ENCODE measurements at regions of chr1 and their contacts with region 1.

Region 1: GRCh38 chr1:101178688-101179491 is 57.9 kb upstream of the S1PR1 start:
- DNase-seq: peak; percentile 66
- H3K4me3 Mint-ChIP-seq: peak overlapping the region; percentile 63
- H3K27ac Mint-ChIP-seq: peak overlapping the region; percentile 100
- H3K4me1 Mint-ChIP-seq: peaks cover 82% of the 10 kb centered on the region
- H3K27me3 Mint-ChIP-seq: no peaks in the 10 kb centered on the region

Region 2: DNA sequence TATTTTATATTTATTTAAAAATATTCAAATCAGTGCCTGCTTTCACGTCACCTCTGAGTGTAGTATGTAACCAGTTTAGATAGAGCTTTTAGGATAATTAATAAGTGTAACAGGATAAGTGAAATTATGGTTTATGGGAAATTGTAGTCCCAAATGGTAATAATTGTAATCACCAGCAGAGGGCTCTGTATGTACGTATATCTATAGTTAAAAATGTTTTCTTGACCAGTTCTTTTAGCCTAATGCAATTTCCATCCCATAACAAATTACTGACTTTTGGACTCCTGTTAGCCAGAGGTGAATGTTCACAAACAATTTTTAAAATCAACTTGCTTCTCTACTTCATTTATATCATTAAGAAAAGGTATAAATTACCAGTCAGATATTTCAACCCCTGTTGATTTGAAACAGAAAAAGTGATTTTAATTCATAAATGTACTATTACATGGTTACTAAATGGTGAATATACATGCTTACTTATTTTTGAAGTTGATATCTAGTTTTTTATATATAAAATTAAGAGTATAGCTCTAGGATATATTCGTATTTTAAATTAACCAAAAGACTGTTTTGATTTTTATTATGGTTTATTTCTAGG is 257.7 kb before region 1 on chr1:
- CTCF ChIA-PET with region 1: no interaction called
- intact Hi-C with region 1: loop called (anchors 1 kb)
- DNase-seq: no peak
- H3K4me3 Mint-ChIP-seq: no peak overlapping the region
- H3K27ac Mint-ChIP-seq: peak overlapping the region; percentile 39
- H3K4me1 Mint-ChIP-seq: peaks cover 16% of the 10 kb centered on the region
- H3K27me3 Mint-ChIP-seq: no peaks in the 10 kb centered on the region

Region 3: GRCh38 chr1:101002551-101002950 is 176.3 kb before region 1 on chr1:
- CTCF ChIA-PET with region 1: no interaction called
- intact Hi-C with region 1: loop called (anchors 1 kb)
- DNase-seq: no peak
- H3K4me3 Mint-ChIP-seq: no peak overlapping the region
- H3K27ac Mint-ChIP-seq: peak overlapping the region; percentile 59
- H3K4me1 Mint-ChIP-seq: peaks cover 52% of the 10 kb centered on the region
- H3K27me3 Mint-ChIP-seq: no peaks in the 10 kb centered on the region

Region 4: GRCh38 chr1:101136739-101137138 is 42.2 kb before region 1 on chr1:
- CTCF ChIA-PET with region 1: interaction called, 10 read pairs
- intact Hi-C with region 1: loop called (anchors 1 kb)
- DNase-seq: peak; percentile 61
- H3K4me3 Mint-ChIP-seq: no peak overlapping the region
- H3K27ac Mint-ChIP-seq: peak overlapping the region; percentile 62
- H3K4me1 Mint-ChIP-seq: peaks cover 67% of the 10 kb centered on the region
- H3K27me3 Mint-ChIP-seq: no peaks in the 10 kb centered on the region

Region 5: GRCh38 chr1:101205457-101205856 is 26.6 kb after region 1 on chr1:
- CTCF ChIA-PET with region 1: interaction called, 7 read pairs
- intact Hi-C with region 1: loop called (anchors 1 kb)
- DNase-seq: no peak
- H3K4me3 Mint-ChIP-seq: no peak overlapping the region
- H3K27ac Mint-ChIP-seq: peak overlapping the region; percentile 57
- H3K4me1 Mint-ChIP-seq: peaks cover 17% of the 10 kb centered on the region
- H3K27me3 Mint-ChIP-seq: no peaks in the 10 kb centered on the region

Region 6: DNA sequence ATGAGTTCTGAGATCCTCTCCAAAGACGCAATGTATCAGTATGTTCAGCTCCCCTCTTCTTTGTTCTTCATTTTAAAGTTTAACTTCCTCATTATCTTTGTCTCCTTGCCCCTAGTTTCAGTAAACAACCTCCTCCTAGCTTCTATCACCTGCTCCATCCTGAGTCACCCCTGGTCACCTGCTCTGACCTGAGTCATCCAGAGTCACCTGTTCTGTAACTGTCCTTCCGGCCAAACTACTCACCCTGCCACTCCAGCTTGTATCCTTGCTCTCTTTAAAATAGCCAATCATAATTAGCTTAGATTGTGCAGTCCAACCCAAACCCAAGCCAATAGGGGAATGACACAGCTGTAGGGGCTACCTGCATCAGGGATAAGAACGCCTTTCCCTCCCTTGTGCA is 485.8 kb after region 1 on chr1:
- CTCF ChIA-PET with region 1: no interaction called
- intact Hi-C with region 1: no loop called
- DNase-seq: no peak
- H3K4me3 Mint-ChIP-seq: no peak overlapping the region
- H3K27ac Mint-ChIP-seq: no peak overlapping the region
- H3K4me1 Mint-ChIP-seq: no peaks in the 10 kb centered on the region
- H3K27me3 Mint-ChIP-seq: no peaks in the 10 kb centered on the region

Region 7: DNA sequence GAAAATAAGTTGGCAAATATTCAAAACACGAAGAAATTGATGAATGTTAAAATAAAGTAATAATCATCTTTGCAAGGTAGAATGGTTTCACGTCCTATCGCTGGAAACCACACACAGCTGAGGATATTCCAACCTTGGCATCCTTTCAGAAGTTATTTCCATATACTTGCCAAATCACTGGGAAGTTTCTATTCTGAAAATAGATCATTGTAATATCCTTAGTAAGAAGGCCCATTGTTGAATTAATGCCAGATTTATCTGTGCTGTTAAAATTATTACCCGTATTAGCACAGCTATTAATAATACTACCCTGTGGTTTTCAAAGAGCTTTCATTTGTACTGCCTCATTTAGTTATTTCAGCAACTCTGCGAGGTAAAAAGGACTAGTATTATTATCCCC is 736.7 kb after region 1 on chr1:
- CTCF ChIA-PET with region 1: no interaction called
- intact Hi-C with region 1: no loop called
- DNase-seq: no peak
- H3K4me3 Mint-ChIP-seq: no peak overlapping the region
- H3K27ac Mint-ChIP-seq: no peak overlapping the region
- H3K4me1 Mint-ChIP-seq: no peaks in the 10 kb centered on the region
- H3K27me3 Mint-ChIP-seq: no peaks in the 10 kb centered on the region